IMR-90 (cell line): ENCODE measurements at regions of chr2 and their contacts with region 1.

Region 1: GRCh38 chr2:44291281-44292248 is 16.3 kb downstream of the SLC3A1 start:
- DNase-seq: peak; percentile 75
- ATAC-seq: peak; percentile 95
- H3K4me3 ChIP-seq: no peak overlapping the region
- H3K27ac ChIP-seq: no peak overlapping the region
- H3K4me1 ChIP-seq: peaks cover 7% of the 10 kb centered on the region
- H3K27me3 ChIP-seq: peaks cover 20% of the 10 kb centered on the region
- CTCF ChIP-seq: peak; percentile 74
- POLR2A ChIP-seq: no peak
- RAD21 ChIP-seq: peak; percentile 79

Region 2: DNA sequence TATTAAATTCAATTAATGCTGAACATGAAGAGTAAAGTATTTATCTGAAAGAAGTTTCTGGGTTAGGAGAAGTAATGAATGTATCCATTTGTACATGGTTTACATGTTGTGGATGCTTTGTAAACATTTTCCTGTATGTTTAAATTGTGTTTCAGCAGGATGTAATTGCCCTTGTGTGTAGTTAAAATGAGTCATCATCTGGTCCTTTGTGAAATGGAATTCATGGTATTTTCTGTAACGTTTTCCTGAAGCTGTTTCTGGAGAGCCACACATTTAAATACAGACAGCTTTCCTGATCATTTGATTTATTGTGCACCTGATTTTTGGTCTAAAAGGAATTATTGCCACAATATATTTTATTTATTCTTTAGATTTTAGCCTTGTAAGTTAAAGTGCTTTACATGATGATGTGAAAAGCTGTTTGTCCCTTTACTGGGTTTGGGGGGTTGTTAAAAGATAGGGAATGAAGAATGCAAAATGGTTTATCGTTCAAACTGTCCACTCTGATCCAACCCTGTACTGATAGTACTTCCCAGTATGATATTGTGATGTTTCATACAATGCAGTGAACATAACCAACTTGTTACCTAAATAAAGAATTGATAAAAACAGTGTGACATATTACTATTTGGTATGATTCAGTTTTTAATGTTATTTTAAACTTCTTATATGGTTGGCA is 58.0 kb before region 1 on chr2:
- CTCF ChIA-PET with region 1: no interaction called
- POLR2A ChIA-PET with region 1: no interaction called
- dilution Hi-C with region 1: no loop called
- in situ Hi-C with region 1: no loop called
- intact Hi-C with region 1: no loop called
- DNase-seq: peak; percentile 85
- ATAC-seq: peak; percentile 94
- H3K4me3 ChIP-seq: no peak overlapping the region
- H3K27ac ChIP-seq: peak overlapping the region; percentile 50; the same call in 1 of the 2 replicates
- H3K4me1 ChIP-seq: peaks cover 2% of the 10 kb centered on the region; the same call in 1 of the 2 replicates
- H3K27me3 ChIP-seq: no peaks in the 10 kb centered on the region
- CTCF ChIP-seq: no peak
- POLR2A ChIP-seq: no peak
- RAD21 ChIP-seq: 0 out of 2 replicates have a peak, but pooled peaks have one; percentile 4

Region 3: DNA sequence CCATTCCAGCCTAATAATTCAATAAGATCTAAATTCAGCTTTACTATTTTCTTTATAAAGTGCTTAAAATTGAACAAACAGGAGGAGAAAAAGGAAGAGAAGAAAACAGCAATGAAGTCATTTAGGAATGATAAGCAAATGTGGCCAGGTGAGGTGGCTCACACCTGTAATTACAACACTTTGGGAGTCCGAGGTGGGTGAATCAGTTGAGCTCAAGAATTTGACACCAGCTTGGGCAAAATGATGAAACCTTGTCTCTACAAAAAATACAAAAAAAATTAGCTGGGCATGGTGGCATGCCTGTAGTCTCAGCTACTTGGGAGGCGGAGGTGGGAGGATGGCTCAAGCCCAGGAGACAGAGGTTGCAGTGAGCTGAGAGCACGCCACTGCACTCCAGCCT is 199.2 kb after region 1 on chr2:
- CTCF ChIA-PET with region 1: no interaction called
- POLR2A ChIA-PET with region 1: no interaction called
- dilution Hi-C with region 1: no loop called
- in situ Hi-C with region 1: no loop called
- intact Hi-C with region 1: no loop called
- DNase-seq: no peak
- ATAC-seq: no peak
- H3K4me3 ChIP-seq: no peak overlapping the region
- H3K27ac ChIP-seq: no peak overlapping the region
- H3K4me1 ChIP-seq: no peaks in the 10 kb centered on the region
- H3K27me3 ChIP-seq: no peaks in the 10 kb centered on the region
- CTCF ChIP-seq: no peak
- POLR2A ChIP-seq: no peak
- RAD21 ChIP-seq: no peak

Region 4: DNA sequence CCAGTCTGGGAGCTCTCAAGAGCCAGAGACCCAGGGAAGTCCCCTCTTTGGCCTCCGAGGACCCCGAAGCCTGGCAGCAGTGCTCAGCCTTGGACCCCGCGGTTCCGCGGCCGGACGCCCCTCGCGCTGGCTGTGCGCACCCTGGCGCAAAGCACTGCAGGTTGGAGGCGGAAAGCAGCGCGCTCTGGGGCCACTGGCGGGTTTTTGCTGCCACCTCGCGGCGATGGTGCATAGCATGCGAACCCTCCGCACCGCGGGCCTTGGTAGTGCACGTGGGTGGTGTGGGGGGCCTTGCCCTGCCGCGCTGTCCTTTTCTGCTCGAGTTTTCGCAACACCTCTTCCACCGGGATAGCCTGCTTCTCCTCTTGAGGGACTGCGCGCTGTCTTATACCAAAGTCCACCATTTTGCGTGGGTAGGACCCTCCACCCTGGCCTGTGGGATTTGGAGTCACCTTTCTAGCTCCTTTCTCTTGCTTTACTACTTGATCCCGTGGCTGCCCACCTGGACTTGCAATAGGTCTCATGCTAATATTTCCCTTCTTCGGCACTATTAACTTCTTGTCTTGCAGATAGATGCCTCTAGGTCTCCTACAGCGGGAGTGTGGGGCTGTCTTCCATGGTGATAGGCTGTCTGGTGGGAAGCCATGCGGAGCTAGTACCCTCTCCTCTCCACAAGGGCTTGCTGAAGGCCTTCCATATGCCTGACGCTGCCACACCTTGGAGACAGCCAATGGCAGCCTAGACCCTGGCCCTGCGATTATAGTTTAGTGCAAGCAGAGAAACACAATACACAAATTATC is 664.2 kb after region 1 on chr2:
- CTCF ChIA-PET with region 1: no interaction called
- POLR2A ChIA-PET with region 1: no interaction called
- dilution Hi-C with region 1: no loop called
- in situ Hi-C with region 1: no loop called
- intact Hi-C with region 1: loop called (anchors 10 kb)
- DNase-seq: peak; percentile 56
- ATAC-seq: peak; percentile 78
- H3K4me3 ChIP-seq: no peak overlapping the region
- H3K27ac ChIP-seq: no peak overlapping the region
- H3K4me1 ChIP-seq: no peaks in the 10 kb centered on the region
- H3K27me3 ChIP-seq: peaks cover 52% of the 10 kb centered on the region
- CTCF ChIP-seq: peak; percentile 94
- POLR2A ChIP-seq: no peak
- RAD21 ChIP-seq: peak; percentile 89